ENCODE measurements at regions of chr1 and their contacts with region 1.

Region 1: DNA sequence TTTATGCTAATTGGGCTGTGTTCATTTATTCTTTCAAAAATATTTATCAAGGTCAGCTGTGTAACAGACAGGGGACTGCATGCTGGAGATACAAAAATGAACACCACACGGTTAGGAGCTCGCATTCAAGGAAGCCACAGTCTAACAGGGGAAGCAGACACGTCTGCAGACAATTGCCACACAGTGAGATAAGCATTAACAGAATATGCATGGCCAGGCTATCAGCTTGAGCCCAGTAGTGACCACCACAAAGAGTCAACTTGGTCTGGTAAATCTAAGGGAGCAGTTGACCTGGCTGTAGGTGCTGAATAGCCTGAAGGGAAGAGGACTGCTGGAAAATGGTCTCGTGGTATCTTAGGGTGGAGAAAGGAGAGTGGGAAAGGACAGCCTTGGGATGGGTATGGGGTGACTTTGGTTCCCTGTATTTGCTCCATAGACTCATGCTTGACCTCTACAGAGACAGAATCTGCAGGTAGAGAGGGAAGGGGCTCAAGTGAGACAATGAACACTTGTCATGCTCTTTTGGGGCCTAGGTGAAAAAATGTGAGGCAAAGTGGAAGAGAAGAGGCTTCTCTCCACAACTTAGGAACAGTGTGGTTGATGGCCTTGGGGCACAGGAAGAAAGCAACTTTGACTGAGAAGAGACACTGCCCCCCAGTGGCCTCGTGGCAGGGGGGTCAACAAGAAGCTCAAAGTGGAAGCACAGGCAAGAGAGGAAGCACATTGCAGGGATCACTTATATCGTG is 7.6 kb upstream of the NPL start:
- DNase-seq: peak; percentile 69 to 83 (median 78)
- ATAC-seq: peak in 3 of 4 donors; percentile 80 to 87 (median 82)
- H3K4me3 ChIP-seq: no peak overlapping the region
- H3K27ac ChIP-seq: no peak overlapping the region
- H3K4me1 ChIP-seq: peaks cover 0 to 13% (median under 1%) of the 10 kb centered on the region in 12 donors
- H3K27me3 ChIP-seq: no peaks in the 10 kb centered on the region
- CTCF ChIP-seq: peak; percentile 64 to 85 (median 79)
- POLR2A ChIP-seq: no peak

Region 2: GRCh38 chr1:182453626-182454025 is 328.4 kb before region 1 on chr1:
- intact Hi-C with region 1: loop called (anchors 5 kb)
- DNase-seq: no peak
- ATAC-seq: no peak
- H3K4me3 ChIP-seq: no peak overlapping the region
- H3K27ac ChIP-seq: no peak overlapping the region
- H3K4me1 ChIP-seq: no peaks in the 10 kb centered on the region
- H3K27me3 ChIP-seq: peaks cover 0 to 9% (median 0%) of the 10 kb centered on the region in 9 donors
- CTCF ChIP-seq: no peak
- POLR2A ChIP-seq: no peak

Region 3: DNA sequence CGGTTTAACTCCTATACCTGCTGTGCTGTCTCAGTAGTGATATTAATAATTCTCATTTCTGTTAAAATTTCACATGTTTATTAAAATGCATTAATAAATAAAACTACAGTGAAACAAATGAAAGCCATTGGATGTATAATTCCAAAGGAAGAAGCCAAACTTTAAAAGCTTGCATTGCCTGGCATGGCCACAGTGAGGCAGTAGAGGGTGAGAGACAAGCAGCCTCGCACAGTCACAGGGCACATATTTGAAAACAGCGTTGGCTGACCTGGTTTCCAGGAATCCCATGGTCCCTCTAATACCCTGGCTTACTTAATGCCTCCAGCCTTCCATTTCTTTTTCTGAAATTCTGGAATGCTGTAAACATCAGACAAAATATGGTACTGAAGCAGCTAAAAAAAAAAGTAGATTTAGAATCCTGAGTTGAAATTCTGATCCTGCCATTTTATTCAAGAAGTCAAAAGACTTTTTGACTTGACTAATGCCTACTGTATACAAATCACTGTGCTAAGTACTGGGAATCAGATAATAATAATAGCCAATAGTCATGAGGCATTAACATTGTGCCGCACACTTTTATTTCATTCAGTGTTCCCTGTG is 186.3 kb before region 1 on chr1:
- intact Hi-C with region 1: loop called in 6 of 10 experiments (anchors 1 to 2 kb)
- DNase-seq: peak; percentile 56 to 75 (median 68)
- ATAC-seq: peak in 3 of 4 donors; percentile 74 to 84 (median 76)
- H3K4me3 ChIP-seq: no peak overlapping the region
- H3K27ac ChIP-seq: no peak overlapping the region
- H3K4me1 ChIP-seq: peaks cover 0 to 42% (median 3%) of the 10 kb centered on the region in 12 donors
- H3K27me3 ChIP-seq: no peaks in the 10 kb centered on the region
- CTCF ChIP-seq: peak; percentile 81 to 93 (median 90)
- POLR2A ChIP-seq: no peak

Region 4: DNA sequence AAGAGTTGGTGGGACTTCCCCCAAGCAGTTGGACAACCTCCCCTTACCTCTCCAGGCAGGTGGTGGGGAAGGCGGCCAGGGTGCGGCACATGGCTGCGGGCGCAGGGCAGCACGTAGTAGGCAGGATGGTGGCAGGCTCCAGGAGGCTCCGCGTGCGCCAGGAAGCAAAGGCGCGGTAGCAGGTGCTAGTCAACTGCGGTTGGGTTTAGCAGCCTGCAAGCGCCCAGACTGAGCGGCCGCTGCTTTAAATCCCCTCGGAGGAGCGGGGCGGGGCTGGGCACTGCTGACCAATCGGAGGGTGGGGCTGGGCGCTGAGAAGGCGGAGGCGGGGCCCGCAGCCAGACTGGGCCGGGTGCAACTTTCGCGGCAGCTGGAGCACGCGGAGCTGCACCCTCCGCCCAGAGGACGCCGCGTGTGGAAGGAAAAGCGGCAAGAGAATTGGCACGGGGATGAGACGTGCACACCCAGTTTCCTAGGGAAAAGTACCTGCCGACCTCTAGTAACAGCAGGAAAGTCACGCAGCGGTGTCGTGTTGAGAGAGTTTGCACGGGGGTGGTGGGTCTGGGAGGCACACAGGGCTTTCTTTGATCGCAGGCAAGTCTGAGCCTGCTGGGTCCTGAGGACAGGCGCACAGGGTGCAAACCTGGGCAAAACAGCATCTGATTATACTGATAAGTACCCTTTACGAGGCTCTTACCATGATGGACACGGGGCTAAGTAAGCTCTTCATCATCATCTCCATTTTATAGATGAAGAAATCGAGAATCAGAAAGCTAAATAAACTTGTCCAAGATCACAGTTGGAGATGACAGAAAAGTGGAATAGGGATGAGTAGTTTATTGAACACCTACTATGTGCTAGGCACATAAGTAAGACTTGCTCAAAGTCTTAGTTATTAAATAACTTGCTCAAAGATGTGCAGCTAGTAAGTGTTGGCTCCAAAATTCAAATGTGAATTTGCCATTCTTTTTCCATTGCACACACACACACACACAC is 177.5 kb before region 1 on chr1 and contains the start of gene RGS16:
- intact Hi-C with region 1: loop called (anchors 1 to 2 kb)
- DNase-seq: peak; percentile 96 to 97 (median 96)
- ATAC-seq: peak; percentile 96 to 98 (median 98)
- H3K4me3 ChIP-seq: peak within 1 kb of the TSS; percentile 33 to 94 (median 60)
- H3K27ac ChIP-seq: peak within 1 kb of the TSS in 11 of 12 donors; percentile 16 to 76 (median 52)
- H3K4me1 ChIP-seq: peaks cover 0 to 58% (median 21%) of the 10 kb centered on the region in 12 donors
- H3K27me3 ChIP-seq: no peaks in the 10 kb centered on the region
- CTCF ChIP-seq: no peak
- POLR2A ChIP-seq: peak; percentile 7 to 92
- total RNA-seq, gene RGS16: 0.75 to 9.3 (median 2.0) TPM

Region 5: GRCh38 chr1:183023601-183024316 is 241.7 kb after region 1 on chr1:
- intact Hi-C with region 1: no loop called
- DNase-seq: peak; percentile 60 to 80 (median 66)
- ATAC-seq: peak; percentile 14 to 60 (median 44)
- H3K4me3 ChIP-seq: peak overlapping the region; percentile 42 to 95 (median 84)
- H3K27ac ChIP-seq: peak overlapping the region; percentile 99 to 100 (median 100)
- H3K4me1 ChIP-seq: peaks cover 0 to 58% (median 37%) of the 10 kb centered on the region in 12 donors
- H3K27me3 ChIP-seq: peaks cover 0 to 4% (median 0%) of the 10 kb centered on the region in 9 donors
- CTCF ChIP-seq: peak; percentile 20 to 63 (median 48)
- POLR2A ChIP-seq: no peak